Caco-2 (cell line): ENCODE measurements at regions of chr15 and their contacts with region 1.

Region 1: GRCh38 chr15:47196057-47196456 is 521.2 kb upstream of the SEMA6D start:
- DNase-seq: peak; percentile 74 to 78
- H3K4me3 ChIP-seq: no peak overlapping the region
- H3K4me3 Mint-ChIP-seq: no peak overlapping the region
- H3K27ac Mint-ChIP-seq: no peak overlapping the region
- H3K4me1 ChIP-seq: 0 out of 2 replicates have a peak, but pooled peaks cover 4% of the 10 kb centered on the region
- H3K4me1 Mint-ChIP-seq: no peaks in the 10 kb centered on the region
- H3K27me3 ChIP-seq: no peaks in the 10 kb centered on the region
- H3K27me3 Mint-ChIP-seq: no peaks in the 10 kb centered on the region
- CTCF ChIP-seq: peak; percentile 78 to 81

Region 2: GRCh38 chr15:46304320-46304719 is 891.7 kb before region 1 on chr15:
- CTCF ChIA-PET with region 1: no interaction called
- POLR2A ChIA-PET with region 1: no interaction called
- intact Hi-C with region 1: no loop called
- DNase-seq: peak in 1 of 2 experiments; percentile 27
- H3K4me3 ChIP-seq: no peak overlapping the region
- H3K4me3 Mint-ChIP-seq: no peak overlapping the region
- H3K27ac Mint-ChIP-seq: no peak overlapping the region
- H3K4me1 ChIP-seq: 0 out of 2 replicates have a peak, but pooled peaks cover 3% of the 10 kb centered on the region
- H3K4me1 Mint-ChIP-seq: no peaks in the 10 kb centered on the region
- H3K27me3 ChIP-seq: no peaks in the 10 kb centered on the region
- H3K27me3 Mint-ChIP-seq: no peaks in the 10 kb centered on the region
- CTCF ChIP-seq: peak; percentile 41 to 42

Region 3: GRCh38 chr15:47129033-47129432 is 67.0 kb before region 1 on chr15:
- CTCF ChIA-PET with region 1: no interaction called
- POLR2A ChIA-PET with region 1: no interaction called
- intact Hi-C with region 1: no loop called
- DNase-seq: no peak
- H3K4me3 ChIP-seq: no peak overlapping the region
- H3K4me3 Mint-ChIP-seq: no peak overlapping the region
- H3K27ac Mint-ChIP-seq: no peak overlapping the region
- H3K4me1 ChIP-seq: peaks cover 4% of the 10 kb centered on the region; the same call in 1 of the 2 replicates
- H3K4me1 Mint-ChIP-seq: peaks cover 7% of the 10 kb centered on the region
- H3K27me3 ChIP-seq: no peaks in the 10 kb centered on the region
- H3K27me3 Mint-ChIP-seq: no peaks in the 10 kb centered on the region
- CTCF ChIP-seq: no peak

Region 4: DNA sequence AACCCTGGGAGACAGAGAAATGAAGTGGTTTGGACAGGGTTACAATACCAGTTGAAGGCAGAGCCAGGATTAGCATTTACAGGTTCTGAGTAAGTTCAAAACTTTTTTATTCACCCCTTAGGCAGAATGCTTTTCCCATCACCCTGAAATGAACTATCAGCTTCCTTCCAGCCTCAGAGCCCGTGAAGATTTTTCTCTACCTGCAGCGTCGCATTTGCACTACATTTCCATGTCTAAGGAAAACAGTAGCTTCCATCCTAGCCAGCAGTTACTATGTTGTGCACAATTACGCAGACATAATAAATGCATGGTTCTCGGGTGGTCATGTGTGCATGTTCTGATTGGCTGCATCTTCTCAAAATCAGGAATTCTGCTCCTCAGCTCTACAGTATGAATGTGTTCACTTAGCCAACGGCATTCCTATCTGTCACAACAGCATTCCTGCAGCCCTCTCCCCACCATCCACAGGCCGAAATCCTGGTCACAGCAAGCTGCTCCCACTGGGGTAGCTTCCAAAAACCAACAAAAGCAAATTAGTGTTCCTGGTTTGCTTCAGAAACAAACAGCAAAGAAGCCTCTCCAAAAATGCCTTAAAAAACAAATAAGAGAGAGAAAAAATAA is 10.4 kb after region 1 on chr15:
- CTCF ChIA-PET with region 1: no interaction called
- POLR2A ChIA-PET with region 1: no interaction called
- intact Hi-C with region 1: no loop called
- DNase-seq: no peak
- H3K4me3 ChIP-seq: no peak overlapping the region
- H3K4me3 Mint-ChIP-seq: no peak overlapping the region
- H3K27ac Mint-ChIP-seq: no peak overlapping the region
- H3K4me1 ChIP-seq: no peaks in the 10 kb centered on the region
- H3K4me1 Mint-ChIP-seq: no peaks in the 10 kb centered on the region
- H3K27me3 ChIP-seq: no peaks in the 10 kb centered on the region
- H3K27me3 Mint-ChIP-seq: no peaks in the 10 kb centered on the region
- CTCF ChIP-seq: no peak

Region 5: GRCh38 chr15:47374222-47374621 is 178.2 kb after region 1 on chr15:
- CTCF ChIA-PET with region 1: no interaction called
- POLR2A ChIA-PET with region 1: no interaction called
- intact Hi-C with region 1: loop called (anchors 10 kb)
- DNase-seq: no peak
- H3K4me3 ChIP-seq: no peak overlapping the region
- H3K4me3 Mint-ChIP-seq: no peak overlapping the region
- H3K27ac Mint-ChIP-seq: no peak overlapping the region
- H3K4me1 ChIP-seq: no peaks in the 10 kb centered on the region
- H3K4me1 Mint-ChIP-seq: no peaks in the 10 kb centered on the region
- H3K27me3 ChIP-seq: no peaks in the 10 kb centered on the region
- H3K27me3 Mint-ChIP-seq: peaks cover 8% of the 10 kb centered on the region
- CTCF ChIP-seq: no peak

Region 6: DNA sequence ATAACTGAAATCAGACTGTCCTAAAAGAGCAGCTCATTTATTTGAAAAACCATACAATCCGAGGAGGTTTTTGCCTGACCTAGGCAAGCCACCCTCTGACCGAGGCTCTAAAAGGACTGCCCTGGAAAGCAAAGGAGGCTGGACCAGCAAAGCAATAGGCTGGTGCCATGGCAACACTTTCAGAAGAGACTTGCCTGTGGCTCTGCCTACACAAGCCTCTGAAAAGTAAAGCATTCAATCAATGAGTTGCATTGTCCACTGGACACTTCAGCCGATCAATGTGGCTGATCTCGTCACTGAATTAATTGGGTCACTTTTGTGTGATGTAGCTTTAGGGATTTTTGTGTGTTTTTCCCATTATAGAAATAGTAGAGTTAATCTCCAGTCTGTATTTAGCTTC is 422.2 kb after region 1 on chr15:
- CTCF ChIA-PET with region 1: no interaction called
- POLR2A ChIA-PET with region 1: no interaction called
- intact Hi-C with region 1: loop called (anchors 5 kb)
- DNase-seq: no peak
- H3K4me3 ChIP-seq: no peak overlapping the region
- H3K4me3 Mint-ChIP-seq: no peak overlapping the region
- H3K27ac Mint-ChIP-seq: no peak overlapping the region
- H3K4me1 ChIP-seq: no peaks in the 10 kb centered on the region
- H3K4me1 Mint-ChIP-seq: no peaks in the 10 kb centered on the region
- H3K27me3 ChIP-seq: peaks cover 1% of the 10 kb centered on the region
- H3K27me3 Mint-ChIP-seq: peaks cover 4% of the 10 kb centered on the region
- CTCF ChIP-seq: no peak

Region 7: GRCh38 chr15:47717036-47717611 is 521.1 kb after region 1 on chr15 and contains the start of gene SEMA6D:
- CTCF ChIA-PET with region 1: interaction called, 3 read pairs
- POLR2A ChIA-PET with region 1: no interaction called
- intact Hi-C with region 1: loop called (anchors 10 kb)
- DNase-seq: peak; percentile 46 to 51
- H3K4me3 ChIP-seq: no peak within 1 kb of the TSS; the same call in 1 of the 2 replicates
- H3K4me3 Mint-ChIP-seq: peak within 1 kb of the TSS; percentile 64
- H3K27ac Mint-ChIP-seq: no peak within 1 kb of the TSS
- H3K4me1 ChIP-seq: no peaks in the 10 kb centered on the region
- H3K4me1 Mint-ChIP-seq: peaks cover 7% of the 10 kb centered on the region
- H3K27me3 ChIP-seq: no peaks in the 10 kb centered on the region; the same call in 1 of the 2 replicates
- H3K27me3 Mint-ChIP-seq: peaks cover 25% of the 10 kb centered on the region
- CTCF ChIP-seq: no peak
- total RNA-seq, gene SEMA6D: 0.18 and 0.67 TPM in 2 replicates

Region 8: GRCh38 chr15:48084759-48085590 is 888.9 kb after region 1 on chr15:
- CTCF ChIA-PET with region 1: interaction called, 20 read pairs
- POLR2A ChIA-PET with region 1: no interaction called
- intact Hi-C with region 1: loop called (anchors 1 kb)
- DNase-seq: peak in 1 of 2 experiments; percentile 8
- H3K4me3 ChIP-seq: no peak overlapping the region
- H3K4me3 Mint-ChIP-seq: no peak overlapping the region
- H3K27ac Mint-ChIP-seq: no peak overlapping the region
- H3K4me1 ChIP-seq: no peaks in the 10 kb centered on the region
- H3K4me1 Mint-ChIP-seq: no peaks in the 10 kb centered on the region
- H3K27me3 ChIP-seq: no peaks in the 10 kb centered on the region
- H3K27me3 Mint-ChIP-seq: peaks cover 16% of the 10 kb centered on the region
- CTCF ChIP-seq: peak in 1 of 2 experiments; percentile 48